ENCODE measurements at regions of chr1 and their contacts with region 1.

Region 1: DNA sequence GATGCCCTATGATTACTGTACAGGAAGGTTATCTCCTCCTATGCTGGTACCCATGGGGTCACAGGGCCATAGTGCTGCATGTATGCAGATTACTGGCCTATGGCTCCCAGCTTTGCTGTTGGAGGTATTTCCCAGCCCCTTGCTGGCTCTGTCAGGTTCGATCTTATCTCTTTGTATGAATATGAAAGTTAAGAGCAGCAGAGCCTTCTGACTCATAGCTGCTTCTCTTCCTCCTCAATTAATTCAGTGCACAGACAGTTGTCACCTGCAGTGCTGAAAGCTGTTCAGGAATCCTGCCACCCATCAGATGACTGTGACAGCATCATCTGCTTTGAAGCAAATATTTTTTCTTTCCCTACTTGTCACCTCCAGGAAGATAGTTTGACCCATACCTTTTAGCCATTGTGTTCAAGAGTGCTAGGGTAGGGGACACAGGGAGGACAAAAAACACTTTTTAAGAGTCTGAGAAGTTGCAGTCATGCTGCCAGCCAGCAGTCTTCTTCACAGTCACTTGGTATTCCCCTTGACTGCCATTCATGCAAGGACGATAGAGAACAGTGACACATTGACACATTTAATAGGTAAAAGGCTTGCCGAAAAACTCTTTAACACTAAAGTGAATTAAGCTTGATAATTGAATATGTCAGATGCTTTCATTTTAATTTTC is 73.1 kb downstream of the KIF1B start:
- DNase-seq: peak in 1 of 9 donors; percentile 36
- ATAC-seq: no peak
- H3K4me3 ChIP-seq: no peak overlapping the region
- H3K4me3 Mint-ChIP-seq: no peak overlapping the region
- H3K27ac ChIP-seq: no peak overlapping the region
- H3K27ac Mint-ChIP-seq: peak overlapping the region in 1 of 9 donors; percentile 46
- H3K4me1 ChIP-seq: no peaks in the 10 kb centered on the region
- H3K4me1 Mint-ChIP-seq: peaks cover 0 to 19% (median 0%) of the 10 kb centered on the region in 7 donors
- H3K27me3 ChIP-seq: no peaks in the 10 kb centered on the region
- H3K27me3 Mint-ChIP-seq: no peaks in the 10 kb centered on the region

Region 2: GRCh38 chr1:10209905-10210810 is 73.3 kb before region 1 on chr1 and contains the start of gene KIF1B:
- CTCF ChIA-PET with region 1: no interaction called
- POLR2A ChIA-PET with region 1: no interaction called
- intact Hi-C with region 1: loop called in 1 of 2 experiments (anchors 10 kb)
- DNase-seq: peak; percentile 93 to 98 (median 95)
- ATAC-seq: peak; percentile 99
- H3K4me3 ChIP-seq: peak within 1 kb of the TSS; percentile 94
- H3K4me3 Mint-ChIP-seq: peak within 1 kb of the TSS; percentile 83 to 93 (median 90)
- H3K27ac ChIP-seq: peak within 1 kb of the TSS; percentile 75
- H3K27ac Mint-ChIP-seq: peak within 1 kb of the TSS; percentile 51 to 82 (median 67)
- H3K4me1 ChIP-seq: peaks cover 5 to 15% of the 10 kb centered on the region in 2 donors
- H3K4me1 Mint-ChIP-seq: peaks cover 14 to 37% (median 21%) of the 10 kb centered on the region in 7 donors
- H3K27me3 ChIP-seq: peaks cover 0 to 4% of the 10 kb centered on the region in 2 donors
- H3K27me3 Mint-ChIP-seq: peaks cover 0 to 8% (median 0%) of the 10 kb centered on the region in 5 donors
- total RNA-seq, gene KIF1B: 10.4 to 21.6 (median 13.4) TPM